Sigmoid colon (tissue), 7 donors: ENCODE measurements at regions of chrX and their contacts with region 1.

Region 1: GRCh38 chrX:102768987-102769761 is 48.6 kb downstream of the GPRASP3 start:
- DNase-seq: peak; percentile 90
- H3K4me3 ChIP-seq: peak overlapping the region; percentile 30 to 56 (median 53)
- H3K27ac ChIP-seq: peak overlapping the region; percentile 46 to 69 (median 60)
- H3K4me1 ChIP-seq: peaks cover 0 to 19% (median 5%) of the 10 kb centered on the region in 4 donors
- H3K27me3 ChIP-seq: no peaks in the 10 kb centered on the region
- CTCF ChIP-seq: no peak
- EP300 ChIP-seq: no peak
- POLR2A ChIP-seq: no peak

Region 2: DNA sequence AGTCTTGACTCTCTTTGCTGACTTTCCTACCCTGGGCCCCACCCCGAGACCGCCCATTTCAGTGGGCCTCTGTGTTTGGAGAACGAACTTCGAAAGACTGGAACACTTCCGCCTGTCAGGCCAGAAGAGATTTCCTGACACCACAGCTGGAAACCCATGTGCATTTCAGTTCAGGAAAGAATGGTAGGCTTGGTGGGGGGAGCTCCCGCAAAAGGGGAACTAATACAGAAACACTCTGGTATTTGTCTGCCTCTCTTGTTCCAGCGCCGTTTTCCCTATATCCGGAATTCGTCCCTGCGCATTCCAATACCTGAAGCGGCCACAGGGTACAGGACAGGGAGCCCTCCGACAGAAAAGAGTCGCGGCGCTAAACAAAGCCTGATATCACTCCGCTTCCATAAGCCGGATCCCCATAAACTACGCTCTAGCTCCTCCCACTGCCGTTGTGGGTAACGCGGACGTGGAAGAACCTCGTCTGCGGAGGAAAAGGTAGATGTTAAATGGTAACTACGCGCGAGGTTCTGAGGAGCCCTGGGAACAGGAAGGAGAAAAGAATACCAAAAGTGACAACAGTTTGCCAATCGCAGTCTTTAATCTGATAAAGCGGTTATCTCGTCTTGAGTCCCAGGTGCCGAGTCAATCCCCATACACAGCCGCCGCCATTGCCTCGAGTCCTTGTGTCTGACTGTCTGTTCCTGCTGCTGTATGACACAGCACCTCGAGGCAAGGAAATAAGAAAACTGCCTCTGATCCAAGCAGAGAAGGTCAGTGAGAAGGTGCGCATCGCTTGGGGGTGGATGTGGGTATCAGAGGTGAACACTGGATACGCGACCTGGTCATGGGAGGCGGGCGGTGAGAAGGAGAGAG is 169.9 kb before region 1 on chrX and contains the start of gene ARMCX5:
- intact Hi-C with region 1: loop called (anchors 5 kb)
- DNase-seq: peak; percentile 83
- H3K4me3 ChIP-seq: peak within 1 kb of the TSS; percentile 37 to 59 (median 54)
- H3K27ac ChIP-seq: peak within 1 kb of the TSS; percentile 75 to 80 (median 76)
- H3K4me1 ChIP-seq: peaks cover 0 to 4% (median 0%) of the 10 kb centered on the region in 4 donors
- H3K27me3 ChIP-seq: no peaks in the 10 kb centered on the region
- CTCF ChIP-seq: peak in 2 of 4 experiments; percentile 13 to 21
- EP300 ChIP-seq: no peak
- POLR2A ChIP-seq: peak; percentile 27 to 41
- total RNA-seq, gene ARMCX5: 5.0 to 10.0 (median 6.9) TPM

Region 3: DNA sequence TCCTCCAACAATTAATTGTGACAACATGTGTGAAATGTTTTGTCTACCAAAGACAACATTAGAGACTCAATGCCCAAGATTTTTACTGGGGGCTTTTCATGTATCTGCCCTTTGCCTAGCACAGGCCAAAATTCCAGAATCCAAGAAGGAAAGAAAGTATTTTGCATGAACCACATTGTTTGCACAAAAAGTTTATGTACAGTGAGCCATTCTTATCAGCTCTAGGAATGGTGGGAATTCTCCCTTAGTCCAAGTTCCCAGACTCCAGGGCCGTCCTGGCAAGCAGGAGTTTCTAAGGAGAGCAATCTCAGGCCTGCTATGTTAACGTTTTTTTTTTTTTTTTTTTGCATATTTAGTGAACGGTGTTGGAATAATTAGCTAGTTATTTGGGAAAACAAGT is 96.3 kb before region 1 on chrX:
- intact Hi-C with region 1: no loop called
- DNase-seq: no peak
- H3K4me3 ChIP-seq: no peak overlapping the region
- H3K27ac ChIP-seq: peak overlapping the region in 1 of 4 donors; percentile 31
- H3K4me1 ChIP-seq: no peaks in the 10 kb centered on the region
- H3K27me3 ChIP-seq: no peaks in the 10 kb centered on the region
- CTCF ChIP-seq: no peak
- EP300 ChIP-seq: no peak
- POLR2A ChIP-seq: no peak

Region 4: DNA sequence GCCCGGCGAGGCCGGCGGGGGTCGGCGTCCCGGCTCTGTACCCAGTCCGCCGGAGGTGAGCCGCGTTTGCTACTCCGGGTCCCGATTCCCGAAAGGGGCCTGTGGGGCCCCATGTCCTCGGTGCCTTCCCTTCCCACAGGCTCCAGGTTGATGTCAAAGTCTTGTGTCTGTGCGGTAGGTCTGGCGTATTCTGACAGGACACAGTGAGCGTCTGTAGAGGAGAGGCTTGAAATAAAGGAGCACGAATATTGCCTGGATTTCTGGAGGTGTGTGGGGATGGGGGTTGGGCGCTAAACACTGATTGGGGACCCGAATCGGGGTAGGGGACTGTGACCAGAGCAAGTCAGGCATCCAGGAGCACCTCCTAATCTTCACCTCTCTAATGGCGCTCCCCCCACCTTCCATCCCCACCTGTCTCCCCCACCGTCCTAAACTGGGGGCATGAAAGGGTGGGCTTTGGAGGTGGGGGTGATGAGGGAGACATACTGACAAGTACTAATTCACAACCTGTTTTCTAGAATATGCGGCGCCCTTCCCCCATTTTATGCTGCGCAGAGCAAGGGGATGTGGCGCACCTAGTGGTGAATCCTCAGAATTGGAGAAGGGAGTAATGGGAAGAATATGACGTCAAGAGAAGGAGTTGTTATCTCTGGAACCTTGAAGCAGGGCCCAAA is 56.1 kb before region 1 on chrX:
- intact Hi-C with region 1: loop called (anchors 2 kb)
- DNase-seq: peak; percentile 88
- H3K4me3 ChIP-seq: peak overlapping the region; percentile 56 to 75 (median 60)
- H3K27ac ChIP-seq: peak overlapping the region; percentile 82 to 92 (median 87)
- H3K4me1 ChIP-seq: peaks cover 0 to 6% (median 2%) of the 10 kb centered on the region in 4 donors
- H3K27me3 ChIP-seq: peaks cover 0 to 2% (median 0%) of the 10 kb centered on the region in 3 donors
- CTCF ChIP-seq: peak; percentile 29 to 55 (median 53)
- EP300 ChIP-seq: no peak
- POLR2A ChIP-seq: no peak